ENCODE measurements at regions of chr7 and their contacts with region 1.

Region 1: GRCh38 chr7:95476904-95477594 is 8.7 kb upstream of the ASB4 start:
- DNase-seq: peak; percentile 64
- ATAC-seq: peak; percentile 47
- H3K4me3 Mint-ChIP-seq: no peak overlapping the region
- H3K27ac Mint-ChIP-seq: no peak overlapping the region
- H3K4me1 Mint-ChIP-seq: no peaks in the 10 kb centered on the region
- H3K27me3 Mint-ChIP-seq: peaks cover 8% of the 10 kb centered on the region

Region 2: DNA sequence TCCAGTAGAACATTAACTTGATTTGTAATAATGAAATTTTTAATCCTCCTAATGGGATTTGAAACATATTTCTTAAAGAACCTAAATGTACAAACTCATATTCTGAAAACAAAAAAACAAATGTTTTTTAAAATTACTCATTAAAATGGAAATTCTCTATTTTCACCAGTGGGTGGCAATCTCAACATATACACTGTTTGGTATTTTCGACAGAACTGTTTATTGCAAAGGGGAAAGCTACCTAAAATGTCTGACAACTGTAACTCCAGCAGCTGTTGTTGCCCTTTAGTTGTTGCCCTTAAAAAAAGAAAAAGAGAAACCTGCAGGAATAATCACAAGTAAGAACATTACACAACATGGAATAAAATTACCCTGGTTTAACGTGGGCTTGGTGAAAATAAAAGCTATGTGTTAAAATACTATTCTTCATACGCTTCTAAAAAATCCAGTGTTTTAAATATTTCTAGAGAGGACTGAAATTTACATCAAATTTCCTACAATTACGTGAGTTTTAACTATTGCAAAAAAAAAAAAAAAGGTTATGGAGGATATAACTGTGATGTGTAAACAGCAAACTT is 1027.8 kb before region 1 on chr7:
- CTCF ChIA-PET with region 1: interaction called, 24 read pairs
- POLR2A ChIA-PET with region 1: no interaction called
- intact Hi-C with region 1: loop called (anchors 1 to 2 kb)
- DNase-seq: no peak
- ATAC-seq: peak; percentile 39
- H3K4me3 Mint-ChIP-seq: no peak overlapping the region
- H3K27ac Mint-ChIP-seq: no peak overlapping the region
- H3K4me1 Mint-ChIP-seq: no peaks in the 10 kb centered on the region
- H3K27me3 Mint-ChIP-seq: peaks cover 7% of the 10 kb centered on the region

Region 3: GRCh38 chr7:95190515-95190914 is 286.5 kb before region 1 on chr7:
- CTCF ChIA-PET with region 1: no interaction called
- POLR2A ChIA-PET with region 1: no interaction called
- intact Hi-C with region 1: loop called (anchors 5 to 10 kb)
- DNase-seq: peak; percentile 15
- ATAC-seq: no peak
- H3K4me3 Mint-ChIP-seq: no peak overlapping the region
- H3K27ac Mint-ChIP-seq: no peak overlapping the region
- H3K4me1 Mint-ChIP-seq: no peaks in the 10 kb centered on the region
- H3K27me3 Mint-ChIP-seq: no peaks in the 10 kb centered on the region

Region 4: GRCh38 chr7:95246831-95247370 is 230.1 kb before region 1 on chr7:
- CTCF ChIA-PET with region 1: interaction called, 4 read pairs
- POLR2A ChIA-PET with region 1: no interaction called
- intact Hi-C with region 1: loop called in 1 of 2 experiments (anchors 10 kb)
- DNase-seq: peak; percentile 50
- ATAC-seq: peak; percentile 58
- H3K4me3 Mint-ChIP-seq: no peak overlapping the region
- H3K27ac Mint-ChIP-seq: no peak overlapping the region
- H3K4me1 Mint-ChIP-seq: no peaks in the 10 kb centered on the region
- H3K27me3 Mint-ChIP-seq: peaks cover 7% of the 10 kb centered on the region

Region 5: GRCh38 chr7:95491634-95492320 is 14.7 kb after region 1 on chr7:
- CTCF ChIA-PET with region 1: interaction called, 85 read pairs
- POLR2A ChIA-PET with region 1: no interaction called
- intact Hi-C with region 1: no loop called
- DNase-seq: no peak
- ATAC-seq: no peak
- H3K4me3 Mint-ChIP-seq: no peak overlapping the region
- H3K27ac Mint-ChIP-seq: no peak overlapping the region
- H3K4me1 Mint-ChIP-seq: no peaks in the 10 kb centered on the region
- H3K27me3 Mint-ChIP-seq: no peaks in the 10 kb centered on the region

Measured in activated CD4-positive, alpha-beta T cell treated with anti-CD3 and anti-CD28 coated beads for 36 hours (primary cell).